ENCODE measurements at regions of chr6 and their contacts with region 1.

Region 1: GRCh38 chr6:5143634-5144311 is 58.6 kb downstream of the PPP1R3G start:
- DNase-seq: peak; percentile 62
- H3K4me3 Mint-ChIP-seq: no peak overlapping the region
- H3K27ac Mint-ChIP-seq: no peak overlapping the region
- H3K4me1 Mint-ChIP-seq: peaks cover 3% of the 10 kb centered on the region
- H3K27me3 Mint-ChIP-seq: no peaks in the 10 kb centered on the region

Region 2: GRCh38 chr6:5214570-5215052 is 70.8 kb after region 1 on chr6:
- intact Hi-C with region 1: loop called (anchors 10 kb)
- DNase-seq: no peak
- H3K4me3 Mint-ChIP-seq: no peak overlapping the region
- H3K27ac Mint-ChIP-seq: no peak overlapping the region
- H3K4me1 Mint-ChIP-seq: peaks cover 14% of the 10 kb centered on the region
- H3K27me3 Mint-ChIP-seq: no peaks in the 10 kb centered on the region

Region 3: DNA sequence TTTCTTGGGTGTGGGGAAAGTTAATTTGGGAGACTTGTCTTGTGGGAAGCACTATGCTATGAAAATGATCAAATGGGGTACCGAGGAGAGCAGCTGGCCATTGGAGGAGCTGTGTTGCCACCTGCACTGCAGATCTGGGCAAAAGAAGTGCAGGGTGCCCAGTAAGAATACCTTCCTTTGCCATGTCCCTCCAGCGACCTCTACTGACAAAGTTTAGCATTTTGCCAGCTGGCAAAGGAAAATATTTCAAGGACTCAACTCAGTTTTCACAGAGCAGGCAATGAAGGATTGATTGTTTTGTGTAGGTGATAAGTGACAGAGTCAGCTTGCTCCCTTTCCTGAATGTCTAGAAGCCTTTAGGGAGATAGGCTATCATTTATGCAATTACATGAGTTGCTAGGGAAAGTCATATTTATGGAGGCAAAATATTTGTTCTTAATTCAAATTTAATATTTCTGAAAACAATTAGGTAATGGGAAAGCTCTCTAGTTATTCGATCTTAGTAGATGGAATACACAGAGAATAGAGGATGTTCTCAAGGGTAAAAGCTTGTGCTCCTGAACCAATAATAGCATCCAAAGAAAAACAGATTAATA is 236.0 kb after region 1 on chr6:
- intact Hi-C with region 1: loop called (anchors 1 kb)
- DNase-seq: no peak
- H3K4me3 Mint-ChIP-seq: no peak overlapping the region
- H3K27ac Mint-ChIP-seq: no peak overlapping the region
- H3K4me1 Mint-ChIP-seq: no peaks in the 10 kb centered on the region
- H3K27me3 Mint-ChIP-seq: no peaks in the 10 kb centered on the region

Region 4: GRCh38 chr6:5398530-5398929 is 254.8 kb after region 1 on chr6:
- intact Hi-C with region 1: loop called (anchors 1 kb)
- DNase-seq: no peak
- H3K4me3 Mint-ChIP-seq: no peak overlapping the region
- H3K27ac Mint-ChIP-seq: no peak overlapping the region
- H3K4me1 Mint-ChIP-seq: peaks cover 9% of the 10 kb centered on the region
- H3K27me3 Mint-ChIP-seq: no peaks in the 10 kb centered on the region